AG04449 (cell line): ENCODE measurements at regions of chr18 and their contacts with region 1.

Region 1: DNA sequence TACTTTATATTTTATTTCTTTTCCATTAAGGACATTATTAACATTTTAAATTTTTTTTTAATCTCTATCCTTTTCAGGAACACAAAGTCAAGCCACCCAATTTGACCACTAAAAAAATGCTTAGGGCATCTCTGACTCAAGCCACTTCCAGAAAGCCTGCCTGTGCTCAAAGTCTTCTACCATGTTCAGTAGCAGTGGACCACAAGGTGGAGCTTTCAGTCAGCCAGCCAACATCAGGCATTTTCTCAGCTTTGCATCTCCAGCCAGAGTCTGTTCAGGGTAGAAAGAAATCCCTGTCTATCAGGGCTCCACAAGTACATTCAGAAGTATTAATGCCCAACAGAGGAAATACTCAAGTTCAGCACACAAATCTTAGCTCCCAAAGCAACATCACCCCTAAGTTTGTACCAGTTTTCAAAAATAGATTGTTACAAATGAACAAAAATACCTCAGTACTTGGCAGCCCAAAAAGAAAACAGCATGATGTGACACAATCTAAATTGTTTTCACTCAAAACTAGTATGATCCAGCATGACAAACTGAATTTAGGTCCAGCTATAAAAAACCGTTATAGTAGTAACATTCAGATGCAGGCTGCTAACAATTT is 37.6 kb downstream of the C18orf63 start:
- DNase-seq: peak; percentile 19
- H3K4me3 ChIP-seq: no peak overlapping the region
- CTCF ChIP-seq: peak; percentile 77

Region 2: DNA sequence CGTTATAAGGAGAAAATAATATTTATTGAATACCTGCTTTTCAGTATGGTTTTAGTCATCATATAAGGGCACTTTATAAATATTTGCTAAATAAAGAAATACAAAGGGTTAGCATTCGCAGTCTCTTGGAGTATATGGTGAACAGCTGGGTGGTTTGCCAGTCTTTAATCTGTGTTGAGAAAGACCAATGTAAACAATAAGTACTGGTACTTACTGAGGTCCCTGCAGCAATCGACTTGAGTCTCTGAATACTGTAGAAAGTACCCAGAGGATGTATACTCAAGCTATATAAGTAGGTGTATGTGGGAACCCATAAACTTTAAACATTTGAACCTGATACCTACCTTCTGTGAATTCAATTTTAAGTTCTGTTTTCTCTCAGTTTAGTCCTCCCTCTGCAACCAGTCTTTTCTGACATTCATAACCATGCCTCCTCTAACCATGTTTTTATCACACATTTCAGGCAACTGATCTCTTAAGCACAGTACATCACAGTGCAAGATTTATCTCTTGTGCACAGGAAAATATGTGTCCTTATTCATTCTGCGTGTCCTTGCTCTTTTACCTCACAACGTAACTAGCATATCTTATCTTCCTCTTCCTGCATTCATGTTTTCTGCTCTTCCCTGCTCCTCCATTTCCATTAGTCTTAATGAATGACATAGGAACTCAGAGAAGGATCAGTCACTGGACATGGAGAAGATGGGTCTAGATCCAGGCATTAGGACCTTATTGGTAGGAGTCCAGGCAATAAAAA is 15.9 kb before region 1 on chr18:
- CTCF ChIA-PET with region 1: interaction called, 13 read pairs
- POLR2A ChIA-PET with region 1: no interaction called
- DNase-seq: no peak
- H3K4me3 ChIP-seq: no peak overlapping the region
- CTCF ChIP-seq: no peak

Region 3: GRCh38 chr18:74342416-74343043 is 10.7 kb before region 1 on chr18:
- CTCF ChIA-PET with region 1: interaction called, 13 read pairs
- POLR2A ChIA-PET with region 1: no interaction called
- DNase-seq: no peak
- H3K4me3 ChIP-seq: no peak overlapping the region
- CTCF ChIP-seq: peak; percentile 17

Region 4: GRCh38 chr18:74495581-74496507 is 142.6 kb after region 1 on chr18 and contains the start of gene CNDP2:
- CTCF ChIA-PET with region 1: interaction called, 46 read pairs
- POLR2A ChIA-PET with region 1: no interaction called
- DNase-seq: peak; percentile 75
- H3K4me3 ChIP-seq: peak within 1 kb of the TSS; percentile 88
- CTCF ChIP-seq: no peak

Region 5: GRCh38 chr18:74546751-74547550 is 193.7 kb after region 1 on chr18:
- CTCF ChIA-PET with region 1: interaction called, 71 read pairs
- POLR2A ChIA-PET with region 1: no interaction called
- DNase-seq: no peak
- H3K4me3 ChIP-seq: no peak overlapping the region
- CTCF ChIP-seq: no peak